GM12878 (cell line): ENCODE measurements at regions of chr3 and their contacts with region 1.

Region 1: DNA sequence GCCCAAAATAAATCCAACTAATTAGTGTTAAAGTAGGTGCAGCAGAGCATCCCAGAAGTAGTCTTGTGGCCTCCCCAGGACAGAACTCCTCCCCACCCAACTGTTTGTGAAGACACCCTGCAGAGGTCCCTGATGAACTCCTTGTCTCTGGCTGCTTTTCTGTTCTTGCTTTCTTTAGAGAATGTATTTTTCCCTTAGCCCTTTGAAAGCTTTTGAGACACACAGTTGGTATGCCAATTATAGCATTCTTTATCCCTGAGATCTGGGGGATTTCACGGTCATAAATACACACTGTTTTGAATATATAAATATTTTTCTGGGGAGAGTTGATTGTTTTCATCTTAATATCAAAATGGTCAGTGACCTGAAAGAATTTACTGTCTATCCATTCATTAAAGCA is 9.8 kb downstream of the TFG start:
- DNase-seq: no peak
- ATAC-seq: 0 out of 3 replicates have a peak, but pooled peaks have one; percentile 5
- H3K4me3 ChIP-seq: no peak overlapping the region
- H3K27ac ChIP-seq: no peak overlapping the region
- H3K4me1 ChIP-seq: no peaks in the 10 kb centered on the region
- H3K27me3 ChIP-seq: no peaks in the 10 kb centered on the region
- CTCF ChIP-seq: no peak
- EP300 ChIP-seq: no peak
- POLR2A ChIP-seq: no peak
- RAD21 ChIP-seq: no peak

Region 2: GRCh38 chr3:100480111-100480510 is 239.0 kb before region 1 on chr3:
- CTCF ChIA-PET with region 1: no interaction called
- POLR2A ChIA-PET with region 1: no interaction called
- RAD21 ChIA-PET with region 1: no interaction called
- SMC1A ChIA-PET with region 1: no interaction called
- in situ Hi-C with region 1: no loop called
- intact Hi-C with region 1: no loop called
- DNase-seq: no peak
- ATAC-seq: no peak
- H3K4me3 ChIP-seq: no peak overlapping the region
- H3K27ac ChIP-seq: no peak overlapping the region
- H3K4me1 ChIP-seq: no peaks in the 10 kb centered on the region
- H3K27me3 ChIP-seq: no peaks in the 10 kb centered on the region; a peak in 1 of 4 replicates
- CTCF ChIP-seq: no peak
- EP300 ChIP-seq: no peak
- POLR2A ChIP-seq: no peak
- RAD21 ChIP-seq: no peak

Region 3: DNA sequence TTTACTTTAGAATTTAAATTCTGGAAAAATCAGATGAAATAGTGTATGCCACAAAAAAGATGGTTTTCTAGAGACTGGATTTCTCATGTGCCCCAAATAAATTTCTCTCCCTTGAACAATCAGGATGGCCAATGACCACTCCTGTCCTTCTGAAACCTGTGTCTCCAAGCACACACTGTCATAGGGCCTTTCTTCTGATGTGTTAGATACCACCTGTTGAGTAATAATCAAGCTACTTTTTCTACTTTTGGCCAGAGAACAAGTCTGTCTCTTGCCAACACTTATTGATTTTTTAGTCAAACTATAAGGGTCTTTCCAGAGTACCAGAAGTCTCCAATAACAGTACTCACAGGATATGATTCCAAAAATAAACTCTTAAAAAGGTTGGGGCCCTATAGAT is 25.9 kb before region 1 on chr3:
- CTCF ChIA-PET with region 1: interaction called, 3 read pairs
- POLR2A ChIA-PET with region 1: no interaction called
- RAD21 ChIA-PET with region 1: no interaction called
- SMC1A ChIA-PET with region 1: interaction called, 10 read pairs
- in situ Hi-C with region 1: no loop called
- intact Hi-C with region 1: no loop called
- DNase-seq: no peak
- ATAC-seq: no peak
- H3K4me3 ChIP-seq: no peak overlapping the region
- H3K27ac ChIP-seq: no peak overlapping the region
- H3K4me1 ChIP-seq: no peaks in the 10 kb centered on the region
- H3K27me3 ChIP-seq: no peaks in the 10 kb centered on the region
- CTCF ChIP-seq: no peak
- EP300 ChIP-seq: no peak
- POLR2A ChIP-seq: no peak
- RAD21 ChIP-seq: no peak

Region 4: DNA sequence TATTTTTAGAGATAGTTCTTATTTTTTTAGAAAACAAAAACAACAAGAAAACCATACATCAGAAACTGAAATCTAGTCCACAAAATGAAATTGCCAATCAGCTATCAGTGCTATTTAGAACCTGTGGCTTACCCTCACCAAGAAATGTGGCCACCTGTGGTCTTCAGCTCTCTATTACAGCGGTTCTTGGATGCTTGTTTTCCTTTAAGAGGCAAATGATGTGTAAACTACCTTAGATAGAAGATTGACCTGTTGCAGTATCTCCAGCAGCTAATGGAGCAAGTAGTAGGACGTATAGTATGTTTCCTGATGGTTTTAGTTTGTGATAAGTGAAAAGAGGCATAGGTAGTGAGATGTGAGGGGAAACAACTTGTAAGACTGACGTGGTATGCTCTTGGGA is 11.4 kb after region 1 on chr3:
- CTCF ChIA-PET with region 1: interaction called, 11 read pairs
- POLR2A ChIA-PET with region 1: interaction called, 6 read pairs
- RAD21 ChIA-PET with region 1: interaction called, 4 read pairs
- SMC1A ChIA-PET with region 1: interaction called, 34 read pairs
- in situ Hi-C with region 1: no loop called
- intact Hi-C with region 1: no loop called
- DNase-seq: peak; percentile 9
- ATAC-seq: peak; percentile 53
- H3K4me3 ChIP-seq: no peak overlapping the region
- H3K27ac ChIP-seq: no peak overlapping the region
- H3K4me1 ChIP-seq: no peaks in the 10 kb centered on the region; the same call in 1 of the 2 replicates
- H3K27me3 ChIP-seq: no peaks in the 10 kb centered on the region
- CTCF ChIP-seq: no peak
- EP300 ChIP-seq: no peak
- POLR2A ChIP-seq: no peak
- RAD21 ChIP-seq: no peak